AG04450 (cell line): ENCODE measurements at regions of chr11 and their contacts with region 1.

Region 1: GRCh38 chr11:102007567-102008437 is 39.4 kb upstream of the CFAP300 start:
- DNase-seq: peak; percentile 4
- H3K4me3 ChIP-seq: no peak overlapping the region
- H3K27ac ChIP-seq: no peak overlapping the region
- H3K27me3 ChIP-seq: no peaks in the 10 kb centered on the region
- CTCF ChIP-seq: peak; percentile 45

Region 2: DNA sequence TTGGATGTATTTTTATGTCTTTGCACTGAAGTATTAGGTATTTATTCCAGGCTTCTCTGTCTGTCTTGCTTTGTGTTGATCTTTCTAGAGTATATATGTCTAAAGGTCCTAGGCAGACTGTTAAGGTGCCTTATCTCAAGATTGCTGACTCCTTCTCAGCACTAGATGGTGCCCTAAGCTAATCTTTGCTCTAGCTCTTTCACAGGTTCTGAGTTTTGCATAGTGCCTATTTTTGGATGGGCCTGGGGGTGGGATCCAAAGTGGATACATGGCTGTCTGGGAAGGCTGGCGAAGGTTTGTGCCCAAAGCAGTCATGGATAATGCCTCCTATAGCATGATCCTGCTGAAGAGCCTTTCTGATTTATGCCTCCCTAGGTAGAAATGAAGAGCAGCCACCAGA is 578.9 kb before region 1 on chr11:
- CTCF ChIA-PET with region 1: interaction called, 28 read pairs
- POLR2A ChIA-PET with region 1: no interaction called
- DNase-seq: no peak
- H3K4me3 ChIP-seq: no peak overlapping the region
- H3K27ac ChIP-seq: no peak overlapping the region
- H3K27me3 ChIP-seq: no peaks in the 10 kb centered on the region
- CTCF ChIP-seq: peak; percentile 67

Region 3: DNA sequence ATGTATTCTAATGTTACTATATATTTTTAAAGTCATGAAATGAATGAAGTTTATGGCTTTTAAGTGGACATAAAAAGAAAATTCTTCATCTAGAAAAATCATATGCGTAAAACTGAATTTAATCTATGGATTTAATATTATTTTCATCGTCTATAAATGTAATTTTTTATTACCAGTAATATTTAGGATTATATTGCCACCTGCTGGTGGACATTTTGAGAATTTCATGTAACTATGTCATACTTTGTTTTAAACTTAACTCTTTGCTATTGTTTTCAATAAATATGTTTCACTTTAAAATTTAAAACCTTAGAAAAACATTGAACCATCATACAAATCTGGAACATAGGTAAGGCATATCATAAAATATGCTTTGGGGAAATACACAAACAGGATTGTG is 159.5 kb before region 1 on chr11:
- CTCF ChIA-PET with region 1: interaction called, 18 read pairs
- POLR2A ChIA-PET with region 1: no interaction called
- DNase-seq: no peak
- H3K4me3 ChIP-seq: no peak overlapping the region
- H3K27ac ChIP-seq: no peak overlapping the region
- H3K27me3 ChIP-seq: no peaks in the 10 kb centered on the region
- CTCF ChIP-seq: peak; percentile 32; the same call in 1 of the 2 replicates

Region 4: DNA sequence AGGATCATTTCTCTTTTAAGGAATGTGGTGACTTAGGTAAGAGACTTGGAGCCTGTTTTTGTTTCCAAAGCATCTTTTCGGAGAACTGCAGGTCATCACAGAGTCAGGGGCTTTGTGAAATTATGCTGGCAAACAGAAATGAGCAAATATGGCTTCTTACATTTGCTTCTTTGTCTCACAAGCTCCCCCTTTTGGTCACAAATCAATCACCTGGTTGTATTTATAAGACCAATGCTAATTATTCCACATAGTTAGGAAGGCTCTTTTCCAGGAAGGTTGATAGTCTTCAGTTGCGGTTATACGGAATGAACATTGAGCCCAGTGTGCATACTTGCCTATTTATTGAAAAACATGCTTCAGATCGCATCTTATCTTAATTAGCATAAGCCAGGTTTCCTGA is 127.6 kb before region 1 on chr11:
- CTCF ChIA-PET with region 1: interaction called, 17 read pairs
- POLR2A ChIA-PET with region 1: no interaction called
- DNase-seq: no peak
- H3K4me3 ChIP-seq: no peak overlapping the region
- H3K27ac ChIP-seq: no peak overlapping the region
- H3K27me3 ChIP-seq: no peaks in the 10 kb centered on the region
- CTCF ChIP-seq: peak; percentile 54

Region 5: GRCh38 chr11:102026212-102026611 is 18.4 kb after region 1 on chr11:
- CTCF ChIA-PET with region 1: interaction called, 11 read pairs
- POLR2A ChIA-PET with region 1: no interaction called
- DNase-seq: no peak
- H3K4me3 ChIP-seq: no peak overlapping the region
- H3K27ac ChIP-seq: no peak overlapping the region
- H3K27me3 ChIP-seq: no peaks in the 10 kb centered on the region
- CTCF ChIP-seq: no peak